ENCODE measurements at regions of chr6 and their contacts with region 1.

Region 1: DNA sequence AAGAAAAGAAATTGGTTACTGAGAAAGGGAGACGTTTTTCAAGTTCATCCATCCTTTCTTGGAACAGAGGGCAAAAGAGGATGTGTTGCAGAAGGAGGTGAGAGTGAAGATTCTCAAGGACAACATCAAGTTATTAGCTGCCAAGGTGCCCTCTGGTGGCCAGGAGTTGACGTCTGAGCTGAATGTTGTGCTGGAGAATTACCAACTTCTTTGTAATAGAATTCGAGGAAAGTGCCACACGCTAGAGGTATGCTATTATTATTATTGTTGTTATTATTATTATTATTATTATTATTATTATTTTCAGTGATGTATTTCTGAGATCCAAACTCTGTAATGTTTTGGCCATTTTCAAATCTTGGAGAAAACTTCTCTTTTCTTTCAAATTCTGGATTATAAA is 197.0 kb downstream of the UTRN start:
- DNase-seq: peak; percentile 81
- ATAC-seq: peak in 1 of 2 donors; percentile 61

Region 2: GRCh38 chr6:144104898-144105487 is 377.1 kb before region 1 on chr6:
- intact Hi-C with region 1: loop called (anchors 5 to 10 kb)
- DNase-seq: no peak
- ATAC-seq: peak; percentile 88

Region 3: GRCh38 chr6:144390886-144391285 is 91.3 kb before region 1 on chr6:
- intact Hi-C with region 1: no loop called
- DNase-seq: no peak
- ATAC-seq: no peak

Region 4: DNA sequence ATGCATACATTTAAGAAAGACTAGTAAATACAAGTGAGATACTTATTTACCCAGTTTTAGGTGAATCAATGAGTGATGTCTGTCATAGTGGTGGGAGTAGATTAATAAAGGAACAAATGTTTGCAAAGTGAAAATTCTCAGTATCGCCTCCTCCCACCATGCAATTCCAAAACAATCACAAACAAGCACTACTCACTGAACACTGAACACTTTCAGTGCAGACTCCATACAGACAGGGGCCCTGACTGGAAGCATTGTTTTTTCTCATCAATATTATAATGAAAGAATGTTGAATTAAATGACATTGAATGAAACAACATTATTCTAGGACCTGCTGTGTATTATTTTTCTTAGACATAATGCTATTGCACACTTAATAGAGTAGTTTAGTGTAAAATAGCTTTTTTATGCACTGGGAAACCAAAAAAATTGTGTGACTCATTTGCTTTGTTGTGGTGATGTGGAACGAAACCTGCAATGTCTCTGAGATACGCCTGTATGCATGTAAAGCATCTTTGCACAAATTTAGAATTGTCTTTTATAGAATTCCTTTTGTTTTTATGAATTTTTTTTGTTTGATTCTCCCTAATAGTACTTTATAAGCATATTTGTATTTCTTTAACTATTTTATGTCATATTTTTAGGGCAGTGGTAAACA is 120.5 kb after region 1 on chr6:
- intact Hi-C with region 1: no loop called
- DNase-seq: no peak
- ATAC-seq: no peak

Measured in left cardiac atrium (tissue), 4 donors.